ENCODE measurements at regions of chr2 and their contacts with region 1.

Region 1: DNA sequence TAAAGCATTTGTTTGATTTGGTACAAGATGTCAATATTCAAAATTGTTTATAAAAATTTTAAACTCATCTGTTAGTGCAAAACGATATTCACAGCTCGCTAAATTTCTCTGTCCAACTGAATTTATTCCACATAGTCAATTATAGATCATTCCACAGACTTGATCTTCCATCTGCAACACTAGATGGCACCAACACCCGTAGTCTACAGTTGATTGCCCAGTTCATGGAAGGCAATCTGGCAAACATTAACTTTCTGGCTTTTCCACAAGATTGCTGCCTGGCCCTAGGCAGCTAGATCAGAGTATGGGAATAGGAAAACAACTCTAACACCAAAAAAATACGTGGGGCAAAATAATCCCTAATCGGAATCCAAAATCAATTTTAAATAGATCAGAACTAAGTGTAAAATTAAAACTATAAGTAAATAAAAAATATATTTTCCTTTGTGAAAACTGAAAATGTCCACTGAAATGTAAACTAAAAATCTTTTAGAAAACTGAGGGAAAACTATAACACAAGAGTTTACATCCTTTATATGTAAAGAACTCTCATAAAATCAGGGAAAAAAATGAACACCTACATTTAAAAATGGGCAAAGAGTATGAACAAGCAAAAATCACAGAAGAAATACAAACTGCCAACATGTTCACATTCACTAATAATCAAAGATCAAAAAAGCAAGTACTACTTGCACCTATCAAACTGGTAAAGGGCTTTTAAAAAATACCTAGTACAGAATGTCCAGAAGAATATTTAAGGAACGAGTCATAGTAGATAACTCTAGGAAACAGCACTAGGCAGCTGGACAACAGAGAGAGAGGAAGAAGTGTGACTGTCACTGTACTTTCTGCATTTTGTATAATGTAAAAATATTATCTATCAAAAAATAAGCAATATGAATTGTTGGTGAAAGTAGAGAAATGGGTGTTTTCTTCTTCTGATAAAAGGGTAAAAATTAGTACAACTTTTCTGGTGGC is 35.0 kb downstream of the RTN4 start:
- DNase-seq: no peak
- ATAC-seq: peak; percentile 71
- H3K4me3 ChIP-seq: no peak overlapping the region
- H3K27ac ChIP-seq: peak overlapping the region; percentile 91
- H3K4me1 ChIP-seq: peaks cover 74% of the 10 kb centered on the region
- H3K27me3 ChIP-seq: no peaks in the 10 kb centered on the region
- CTCF ChIP-seq: peak; percentile 79

Region 2: DNA sequence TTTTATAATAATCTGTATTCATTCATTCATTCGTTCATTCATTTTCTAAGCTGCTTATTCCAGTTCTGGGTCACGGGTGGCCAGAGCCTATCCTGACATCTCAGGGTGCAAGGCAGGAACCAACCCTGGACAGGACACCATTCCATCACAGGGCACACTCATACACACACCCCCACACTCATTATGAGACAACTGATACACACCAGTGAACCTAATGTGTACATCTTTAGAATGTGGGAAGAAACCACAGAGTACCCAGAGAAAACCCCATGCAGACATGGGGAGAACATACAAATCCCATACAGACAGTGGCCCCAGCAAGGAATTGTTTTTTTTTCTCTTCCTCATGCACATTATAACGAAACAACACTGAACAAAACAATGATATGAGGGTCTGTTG is 19.7 kb before region 1 on chr2:
- CTCF ChIA-PET with region 1: no interaction called
- POLR2A ChIA-PET with region 1: interaction called, 11 read pairs
- in situ Hi-C with region 1: no loop called
- intact Hi-C with region 1: no loop called
- DNase-seq: no peak
- ATAC-seq: no peak
- H3K4me3 ChIP-seq: no peak overlapping the region
- H3K27ac ChIP-seq: no peak overlapping the region
- H3K4me1 ChIP-seq: peaks cover 77% of the 10 kb centered on the region
- H3K27me3 ChIP-seq: no peaks in the 10 kb centered on the region
- CTCF ChIP-seq: no peak

Region 3: GRCh38 chr2:55168221-55169154 is 153.2 kb after region 1 on chr2:
- CTCF ChIA-PET with region 1: interaction called, 4 read pairs
- POLR2A ChIA-PET with region 1: interaction called, 13 read pairs
- in situ Hi-C with region 1: no loop called
- intact Hi-C with region 1: loop called (anchors 2 kb)
- DNase-seq: no peak
- ATAC-seq: peak; percentile 80
- H3K4me3 ChIP-seq: no peak overlapping the region
- H3K27ac ChIP-seq: peak overlapping the region; percentile 60
- H3K4me1 ChIP-seq: peaks cover 23% of the 10 kb centered on the region
- H3K27me3 ChIP-seq: no peaks in the 10 kb centered on the region
- CTCF ChIP-seq: peak; percentile 77